Left cardiac atrium (tissue), 4 donors: ENCODE measurements at regions of chr11 and their contacts with region 1.

Region 1: DNA sequence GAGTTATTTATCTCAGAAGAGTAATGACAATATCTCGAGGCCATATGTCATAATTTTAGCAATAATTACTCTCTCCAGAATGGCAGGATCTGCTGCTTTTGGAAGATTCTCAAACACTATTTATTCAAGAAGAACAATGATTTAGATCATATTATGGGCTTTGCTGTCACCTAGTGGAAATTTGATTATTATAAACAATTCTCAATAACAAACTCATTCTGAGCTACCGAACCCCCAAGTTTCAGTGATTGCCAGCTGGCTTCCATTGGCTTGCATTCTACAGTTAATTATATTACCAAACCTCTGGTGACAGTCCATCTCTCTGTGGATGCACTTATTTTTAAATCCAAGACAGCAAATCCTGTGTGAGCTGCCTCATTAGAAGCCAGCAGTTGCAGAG is 27.9 kb upstream of the SLC36A4 start:
- DNase-seq: no peak
- ATAC-seq: peak in 1 of 2 donors; percentile 19

Region 2: GRCh38 chr11:92941676-92942571 is 283.7 kb before region 1 on chr11:
- intact Hi-C with region 1: loop called (anchors 5 kb)
- DNase-seq: no peak
- ATAC-seq: peak in 1 of 2 donors; percentile 27

Region 3: GRCh38 chr11:92948116-92948515 is 277.5 kb before region 1 on chr11:
- intact Hi-C with region 1: loop called (anchors 5 kb)
- DNase-seq: no peak
- ATAC-seq: no peak